Activated CD8-positive, alpha-beta T cell treated with anti-CD3 and anti-CD28 coated beads, Interleukin-2, amount 10 ng/mL, durations not matched to agents 7 days and 5 days (primary cell): ENCODE measurements at regions of chr18 and their contacts with region 1.

Region 1: GRCh38 chr18:2104620-2105462 is 466.5 kb downstream of the METTL4 start:
- DNase-seq: peak; percentile 66
- ATAC-seq: peak; percentile 84
- H3K4me3 Mint-ChIP-seq: no peak overlapping the region
- H3K27ac Mint-ChIP-seq: no peak overlapping the region
- H3K4me1 Mint-ChIP-seq: no peaks in the 10 kb centered on the region
- H3K27me3 Mint-ChIP-seq: no peaks in the 10 kb centered on the region

Region 2: DNA sequence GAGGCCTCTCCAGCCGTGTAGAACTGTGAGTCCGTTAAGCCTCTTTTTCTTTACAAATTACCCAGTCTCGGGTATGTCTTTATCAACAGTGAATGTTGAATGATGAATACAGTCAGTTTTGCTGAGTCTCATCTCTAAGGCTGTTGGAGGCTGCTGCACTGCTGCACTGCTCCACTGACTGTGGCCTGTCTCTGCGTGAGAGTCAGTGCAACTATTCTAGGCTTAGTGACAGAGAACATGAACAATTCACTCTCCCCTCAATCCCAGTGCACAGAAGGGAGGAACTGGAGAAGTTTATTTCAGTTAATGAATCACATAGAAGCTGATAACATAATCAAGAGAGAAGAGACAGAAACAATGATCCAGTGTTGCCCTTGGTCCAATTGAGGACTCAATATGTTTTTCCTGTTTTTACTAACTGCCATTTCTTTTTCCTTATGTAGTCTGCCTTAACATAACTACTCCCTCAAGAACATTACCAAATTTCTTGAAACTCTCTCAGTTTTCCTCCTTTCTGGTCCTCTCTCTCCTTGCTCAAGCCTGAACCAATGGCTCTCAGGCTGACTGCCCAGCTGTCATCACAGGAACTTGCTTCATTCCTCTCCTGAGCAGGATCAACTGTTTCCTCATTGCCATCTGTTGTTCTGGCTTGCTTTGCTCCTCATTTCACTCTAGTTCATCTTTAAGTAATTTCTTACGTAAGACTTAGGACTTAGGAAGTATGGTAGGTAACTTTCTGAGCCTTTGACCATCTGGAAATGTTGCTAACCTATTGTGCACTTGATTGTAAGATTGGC is 16.8 kb before region 1 on chr18:
- CTCF ChIA-PET with region 1: interaction called, 13 read pairs
- POLR2A ChIA-PET with region 1: no interaction called
- DNase-seq: no peak
- ATAC-seq: no peak
- H3K4me3 Mint-ChIP-seq: no peak overlapping the region
- H3K27ac Mint-ChIP-seq: no peak overlapping the region
- H3K4me1 Mint-ChIP-seq: peaks cover 6% of the 10 kb centered on the region
- H3K27me3 Mint-ChIP-seq: no peaks in the 10 kb centered on the region

Region 3: GRCh38 chr18:2154278-2154677 is 49.4 kb after region 1 on chr18:
- CTCF ChIA-PET with region 1: no interaction called
- POLR2A ChIA-PET with region 1: no interaction called
- DNase-seq: no peak
- ATAC-seq: no peak
- H3K4me3 Mint-ChIP-seq: no peak overlapping the region
- H3K27ac Mint-ChIP-seq: no peak overlapping the region
- H3K4me1 Mint-ChIP-seq: no peaks in the 10 kb centered on the region
- H3K27me3 Mint-ChIP-seq: no peaks in the 10 kb centered on the region